ENCODE measurements at regions of chr7 and their contacts with region 1.

Region 1: DNA sequence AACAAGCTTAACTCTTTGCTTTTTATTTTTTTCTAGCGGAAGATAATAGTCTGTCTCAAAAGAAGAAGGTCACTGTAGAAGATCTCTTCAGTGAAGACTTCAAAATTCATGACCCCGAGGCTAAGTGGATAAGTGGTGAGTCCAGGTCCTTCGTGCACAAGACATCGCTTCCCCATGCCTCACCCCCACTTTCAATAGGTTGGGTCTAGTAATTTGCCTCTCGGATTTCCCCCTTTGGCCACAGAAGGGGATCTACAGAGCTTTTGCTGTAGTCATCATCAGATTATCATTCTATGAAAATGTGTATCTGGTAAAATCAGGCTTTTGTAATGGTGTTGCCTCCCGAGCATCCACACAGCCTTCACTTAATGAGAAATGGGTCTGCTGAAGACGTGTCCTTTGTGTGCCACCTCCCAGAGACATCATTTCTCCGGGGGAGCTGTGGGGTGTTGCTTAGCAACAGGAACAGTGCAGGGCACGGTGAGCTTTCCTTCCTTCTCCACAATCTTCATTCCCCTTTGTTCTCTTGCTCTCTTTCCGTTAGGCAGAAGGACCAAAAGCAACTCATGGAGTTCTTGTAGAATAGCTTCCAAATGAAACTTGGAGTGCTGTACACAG is 422.8 kb downstream of the DPP6 start:
- DNase-seq: no peak
- ATAC-seq: no peak
- H3K4me3 ChIP-seq: no peak overlapping the region
- H3K27ac ChIP-seq: no peak overlapping the region
- H3K4me1 ChIP-seq: no peaks in the 10 kb centered on the region
- H3K27me3 ChIP-seq: no peaks in the 10 kb centered on the region
- CTCF ChIP-seq: no peak

Region 2: DNA sequence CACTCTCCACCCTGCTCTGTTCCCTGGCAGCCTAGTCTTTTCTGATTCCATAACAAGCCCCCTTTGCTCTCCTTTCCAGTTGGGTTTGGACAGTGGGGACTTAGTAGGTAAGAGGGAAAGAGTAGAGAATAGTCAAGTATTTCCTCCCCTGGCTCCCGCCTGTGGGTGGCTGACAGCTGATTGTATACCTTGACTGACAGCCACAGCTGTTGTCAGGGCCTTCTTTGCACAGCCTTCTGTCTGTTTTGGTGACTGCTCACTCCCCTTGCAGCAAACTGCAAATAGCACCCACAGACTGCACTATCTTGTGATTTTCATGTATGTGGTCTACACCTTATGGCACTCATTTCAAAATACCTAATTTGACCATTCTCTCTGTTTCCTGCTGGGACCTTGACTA is 1229.2 kb before region 1 on chr7:
- intact Hi-C with region 1: loop called in 1 of 10 experiments (anchors 5 kb)
- DNase-seq: no peak
- ATAC-seq: no peak
- H3K4me3 ChIP-seq: no peak overlapping the region
- H3K27ac ChIP-seq: no peak overlapping the region
- H3K4me1 ChIP-seq: no peaks in the 10 kb centered on the region
- H3K27me3 ChIP-seq: no peaks in the 10 kb centered on the region
- CTCF ChIP-seq: no peak

Region 3: DNA sequence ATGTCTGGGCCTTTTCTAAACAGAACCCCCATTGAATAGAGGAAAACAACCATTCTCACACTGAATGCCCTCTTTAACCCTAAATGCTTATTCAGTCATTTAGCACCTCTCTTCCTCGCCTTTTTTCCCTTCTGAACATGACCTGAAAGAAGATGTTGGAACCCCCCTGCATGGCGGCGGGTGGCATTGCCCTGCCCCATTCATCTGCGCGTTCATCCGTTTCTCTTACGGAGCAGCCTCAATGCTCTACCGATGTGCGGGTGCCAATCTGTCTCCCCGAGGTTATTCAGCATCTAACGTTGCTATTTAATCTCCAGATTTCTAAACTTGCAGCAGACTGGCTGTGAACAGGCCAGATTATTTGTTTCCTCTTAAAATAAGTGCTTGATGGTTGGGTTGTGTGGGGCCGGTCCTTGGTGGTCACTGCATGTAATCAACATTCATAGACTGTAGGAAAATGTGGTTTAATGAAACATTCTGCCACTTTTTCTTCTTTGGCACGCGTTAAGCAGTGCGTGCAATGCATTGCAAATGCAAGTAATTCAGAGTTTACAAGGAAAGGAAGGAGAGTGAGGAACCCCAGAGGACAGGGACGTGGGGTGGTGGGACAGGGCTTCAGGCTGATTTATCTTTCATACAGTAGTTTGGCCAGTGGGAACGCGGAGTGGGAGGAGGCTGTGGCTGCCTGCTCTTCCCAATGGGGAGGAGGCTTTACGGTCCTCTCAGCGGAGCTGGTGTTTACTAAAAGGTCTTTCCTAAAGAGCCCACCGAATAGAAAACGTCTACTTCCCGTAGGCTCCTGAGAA is 136.1 kb before region 1 on chr7:
- intact Hi-C with region 1: no loop called
- DNase-seq: no peak
- ATAC-seq: no peak
- H3K4me3 ChIP-seq: no peak overlapping the region
- H3K27ac ChIP-seq: no peak overlapping the region
- H3K4me1 ChIP-seq: no peaks in the 10 kb centered on the region
- H3K27me3 ChIP-seq: peaks cover 0 to 5% (median 0%) of the 10 kb centered on the region in 7 donors
- CTCF ChIP-seq: no peak

Region 4: GRCh38 chr7:154581251-154581890 is 106.4 kb after region 1 on chr7:
- intact Hi-C with region 1: no loop called
- DNase-seq: no peak
- ATAC-seq: no peak
- H3K4me3 ChIP-seq: no peak overlapping the region
- H3K27ac ChIP-seq: no peak overlapping the region
- H3K4me1 ChIP-seq: no peaks in the 10 kb centered on the region
- H3K27me3 ChIP-seq: peaks cover 0 to 4% (median 0%) of the 10 kb centered on the region in 7 donors
- CTCF ChIP-seq: no peak

Measured in heart right ventricle (tissue), 16 donors.